Left ventricle myocardium superior (tissue), 1 donor: ENCODE measurements at regions of chr13 and their contacts with region 1.

Region 1: GRCh38 chr13:22325761-22326160 is 654.9 kb downstream of the FGF9 start:
- DNase-seq: no peak
- ATAC-seq: no peak

Region 2: GRCh38 chr13:22141716-22142115 is 184.0 kb before region 1 on chr13:
- intact Hi-C with region 1: no loop called
- DNase-seq: no peak
- ATAC-seq: no peak

Region 3: DNA sequence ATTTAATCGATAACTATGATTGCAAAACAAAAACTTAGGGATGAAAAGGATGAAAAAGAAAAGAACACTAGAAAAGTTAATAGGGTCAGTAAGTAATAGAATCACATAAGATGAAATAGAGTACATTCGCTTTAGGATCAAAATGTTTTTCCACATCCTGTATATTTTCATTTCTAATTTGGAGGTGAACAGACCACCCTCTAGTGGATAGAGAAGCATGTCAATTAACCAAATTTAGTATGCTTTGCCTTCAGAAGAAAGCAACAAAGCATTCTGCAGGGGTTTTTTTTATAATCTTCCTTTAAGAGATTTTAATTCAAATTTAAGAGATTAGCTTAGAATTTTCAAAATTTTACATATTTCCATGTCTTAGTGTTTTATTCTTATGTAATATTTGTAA is 244.1 kb after region 1 on chr13:
- intact Hi-C with region 1: loop called (anchors 5 kb)
- DNase-seq: no peak
- ATAC-seq: no peak